ENCODE measurements at regions of chr10 and their contacts with region 1.

Region 1: DNA sequence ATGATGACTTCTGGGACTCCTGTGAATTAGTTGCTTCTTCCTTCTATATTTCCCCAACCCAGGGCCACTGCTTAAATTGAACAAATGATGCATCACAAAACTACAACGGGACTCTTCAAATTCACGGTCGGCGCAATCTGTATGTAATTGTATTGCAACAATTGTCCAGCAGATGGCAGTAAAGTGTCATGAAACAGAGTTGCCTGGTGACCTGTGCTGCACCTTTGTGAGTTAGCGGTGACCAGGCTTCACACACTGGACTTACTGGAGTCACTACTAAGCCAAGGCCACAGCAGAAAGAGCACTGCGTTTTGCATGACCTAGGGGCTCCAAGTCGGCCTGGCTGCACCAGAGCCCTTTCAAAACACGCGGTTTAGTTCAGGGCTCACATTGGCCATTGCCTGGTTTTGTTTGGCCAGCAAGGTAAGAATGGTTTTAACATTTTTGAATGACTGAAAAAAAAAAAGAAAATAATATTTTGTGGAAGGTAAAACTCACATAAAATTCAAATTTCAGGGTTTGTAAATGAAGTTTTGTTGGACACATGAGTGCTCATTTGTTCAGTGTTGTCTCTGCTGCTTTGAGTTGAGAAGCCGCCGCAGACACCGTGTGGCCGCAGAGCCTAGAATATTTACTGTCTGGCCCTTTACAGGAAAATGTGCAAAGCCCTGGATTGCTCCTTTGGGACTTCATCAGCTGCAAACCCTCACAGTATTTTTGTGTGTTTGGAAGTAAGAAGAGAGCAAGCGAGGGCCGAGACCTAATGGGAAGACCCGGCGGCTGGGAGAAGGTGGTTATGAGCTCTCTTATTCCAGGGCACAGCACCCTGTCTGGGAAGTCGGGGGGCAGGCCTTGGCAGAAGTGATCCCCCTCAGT is 23.2 kb upstream of the ZNF32 start:
- DNase-seq: peak; percentile 56
- H3K4me3 ChIP-seq: no peak overlapping the region
- H3K27ac ChIP-seq: no peak overlapping the region
- H3K4me1 ChIP-seq: no peaks in the 10 kb centered on the region
- H3K27me3 ChIP-seq: peaks cover 4% of the 10 kb centered on the region
- CTCF ChIP-seq: peak; percentile 85

Region 2: GRCh38 chr10:44300666-44301649 is 629.1 kb after region 1 on chr10:
- CTCF ChIA-PET with region 1: no interaction called
- POLR2A ChIA-PET with region 1: no interaction called
- intact Hi-C with region 1: loop called (anchors 10 kb)
- DNase-seq: no peak
- H3K4me3 ChIP-seq: no peak overlapping the region
- H3K27ac ChIP-seq: no peak overlapping the region
- H3K4me1 ChIP-seq: no peaks in the 10 kb centered on the region
- H3K27me3 ChIP-seq: no peaks in the 10 kb centered on the region
- CTCF ChIP-seq: no peak

Region 3: DNA sequence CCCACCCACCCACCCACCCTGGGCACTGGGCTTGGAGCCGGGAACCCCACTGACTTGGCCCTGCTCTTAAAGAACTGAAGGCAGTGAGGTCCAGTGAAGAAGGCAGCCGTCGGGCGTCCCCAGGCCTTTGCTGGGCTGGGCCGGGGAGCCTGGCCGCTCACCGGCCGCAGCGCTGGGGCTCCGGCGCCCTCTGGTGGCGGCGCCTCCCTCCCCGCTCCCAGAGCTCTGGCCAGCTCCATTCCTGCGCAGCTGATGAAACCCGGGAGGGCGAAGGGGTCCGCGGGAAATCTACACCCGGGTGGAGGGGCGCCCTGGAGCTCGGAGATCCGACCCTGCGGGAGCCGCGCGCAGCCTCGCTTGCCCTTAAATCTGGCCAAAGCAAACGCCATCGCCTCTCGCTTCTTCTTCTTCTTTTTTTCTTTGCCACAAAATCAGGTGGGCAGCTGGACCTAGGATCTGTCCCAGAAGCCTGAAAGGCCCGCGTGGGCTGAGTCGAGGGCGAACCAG is 714.7 kb after region 1 on chr10:
- CTCF ChIA-PET with region 1: interaction called, 3 read pairs
- POLR2A ChIA-PET with region 1: no interaction called
- intact Hi-C with region 1: loop called (anchors 5 kb)
- DNase-seq: peak; percentile 49
- H3K4me3 ChIP-seq: no peak overlapping the region
- H3K27ac ChIP-seq: no peak overlapping the region
- H3K4me1 ChIP-seq: no peaks in the 10 kb centered on the region
- H3K27me3 ChIP-seq: peaks cover 27% of the 10 kb centered on the region
- CTCF ChIP-seq: peak; percentile 80

Region 4: GRCh38 chr10:44974628-44975431 is 1302.9 kb after region 1 on chr10:
- CTCF ChIA-PET with region 1: no interaction called
- POLR2A ChIA-PET with region 1: no interaction called
- intact Hi-C with region 1: loop called (anchors 10 kb)
- DNase-seq: peak; percentile 68
- H3K4me3 ChIP-seq: peak overlapping the region; percentile 50
- H3K27ac ChIP-seq: peak overlapping the region; percentile 65
- H3K4me1 ChIP-seq: peaks cover 31% of the 10 kb centered on the region
- H3K27me3 ChIP-seq: no peaks in the 10 kb centered on the region
- CTCF ChIP-seq: peak; percentile 76

Measured in A673 (cell line).